Activated CD4-positive, alpha-beta memory T cell treated with anti-CD3 and anti-CD28 coated beads for 36 hours (primary cell): ENCODE measurements at regions of chr9 and their contacts with region 1.

Region 1: DNA sequence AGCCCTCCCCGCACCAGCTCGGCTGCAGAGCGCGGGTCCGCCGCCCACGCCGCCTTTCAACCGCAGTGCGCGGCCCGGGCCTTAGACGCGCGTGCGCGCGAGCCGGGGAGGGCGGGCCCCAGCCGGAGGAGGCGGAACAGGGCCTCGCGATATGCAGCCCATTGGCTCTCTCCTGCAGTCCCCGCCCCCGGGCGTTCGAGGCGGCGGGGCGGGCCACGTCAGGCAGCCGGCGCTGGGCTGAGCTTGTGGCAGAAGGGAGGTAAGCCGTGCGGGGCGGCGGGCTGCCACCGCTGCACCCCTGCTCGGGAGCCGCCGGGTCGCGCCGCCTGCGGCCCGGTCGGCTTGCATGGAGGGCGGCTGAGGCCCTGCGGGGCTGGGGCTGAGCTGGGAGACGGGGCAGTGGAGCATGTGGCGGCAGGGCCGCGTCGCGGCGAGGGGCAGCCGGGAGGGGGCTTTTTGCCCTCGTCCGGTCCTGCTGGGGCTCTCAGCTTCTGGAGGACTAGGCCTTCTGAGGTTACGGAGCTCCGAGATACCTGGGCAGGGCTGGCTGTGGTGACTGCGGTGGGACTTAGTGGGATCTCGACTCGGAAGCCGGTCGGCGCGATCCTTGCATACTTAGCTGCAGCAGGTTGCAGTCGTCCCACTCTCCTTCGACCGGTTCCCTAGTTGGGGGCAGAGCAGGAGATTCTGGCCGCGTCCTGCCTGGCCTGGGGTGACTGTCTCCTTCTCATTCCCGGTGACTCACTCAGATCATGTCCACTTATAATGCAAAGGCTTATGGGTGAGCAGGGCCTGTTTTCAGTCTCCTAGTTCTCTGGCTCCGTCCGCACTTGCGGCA is at the start of gene FOCAD:
- DNase-seq: peak; percentile 97
- H3K4me3 Mint-ChIP-seq: peak within 1 kb of the TSS; percentile 83
- H3K27ac Mint-ChIP-seq: peak within 1 kb of the TSS; percentile 85
- H3K4me1 Mint-ChIP-seq: peaks cover 22% of the 10 kb centered on the region
- H3K27me3 Mint-ChIP-seq: no peaks in the 10 kb centered on the region
- total RNA-seq, gene FOCAD: 35.4 to 37.1 TPM

Region 2: DNA sequence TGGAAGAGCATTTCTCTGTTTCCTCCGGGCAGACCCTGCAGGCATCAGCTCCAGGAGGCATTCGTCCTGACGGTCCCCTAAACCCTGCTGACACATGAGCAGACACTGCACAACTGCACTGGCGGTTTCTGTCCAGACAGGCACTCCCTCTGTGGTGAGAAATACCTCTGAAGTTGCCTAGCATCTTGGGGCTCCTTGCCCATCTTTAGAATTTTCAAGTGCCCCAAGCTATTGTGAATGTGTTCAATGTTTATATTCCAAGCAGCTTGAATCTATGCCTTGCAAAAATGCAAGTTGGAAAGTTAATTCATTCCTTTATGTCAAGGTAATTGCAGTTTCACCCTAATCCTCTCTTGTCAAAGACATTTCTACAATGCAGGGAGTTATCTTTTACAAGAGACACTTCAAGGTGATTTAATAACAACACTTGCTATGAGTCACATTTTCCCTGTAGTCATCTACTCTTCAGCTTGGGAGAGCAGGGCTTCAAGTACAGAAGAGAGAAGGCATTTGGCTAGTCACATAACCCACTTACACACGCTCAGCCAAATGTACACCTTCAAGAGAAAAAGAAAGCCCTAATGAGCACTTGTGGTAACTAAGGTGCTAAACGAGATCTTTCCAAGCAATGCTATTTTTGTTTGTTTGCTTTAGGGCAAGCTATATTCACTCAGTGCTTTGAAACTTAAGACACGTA is 364.5 kb before region 1 on chr9:
- CTCF ChIA-PET with region 1: no interaction called
- POLR2A ChIA-PET with region 1: interaction called, 3 read pairs
- intact Hi-C with region 1: loop called (anchors 2 kb)
- DNase-seq: peak; percentile 48
- H3K4me3 Mint-ChIP-seq: no peak overlapping the region
- H3K27ac Mint-ChIP-seq: peak overlapping the region; percentile 63
- H3K4me1 Mint-ChIP-seq: peaks cover 80% of the 10 kb centered on the region
- H3K27me3 Mint-ChIP-seq: no peaks in the 10 kb centered on the region

Region 3: DNA sequence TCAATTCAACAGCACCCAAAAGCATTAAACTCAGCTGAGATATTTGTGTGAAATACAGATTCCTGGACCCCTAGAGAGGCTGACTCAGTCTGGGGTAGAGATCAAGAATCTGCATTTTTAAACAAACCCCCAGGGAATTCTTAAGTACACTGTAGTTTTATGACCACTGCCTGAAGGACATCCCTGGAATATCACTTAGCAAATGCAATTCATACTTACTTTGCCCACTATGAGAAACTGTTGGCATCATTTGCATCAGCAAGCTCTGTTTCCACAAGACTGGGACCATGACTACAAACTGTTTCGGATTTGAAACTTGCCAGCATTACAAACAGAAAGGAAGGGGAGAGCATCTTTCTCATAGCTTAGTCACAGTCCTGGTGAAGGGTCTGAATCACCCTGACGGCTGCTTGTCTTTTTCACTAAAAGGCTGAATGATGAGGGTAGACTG is 125.7 kb before region 1 on chr9:
- CTCF ChIA-PET with region 1: interaction called, 6 read pairs
- POLR2A ChIA-PET with region 1: no interaction called
- intact Hi-C with region 1: loop called (anchors 2 kb)
- DNase-seq: peak; percentile 60
- H3K4me3 Mint-ChIP-seq: no peak overlapping the region
- H3K27ac Mint-ChIP-seq: peak overlapping the region; percentile 65
- H3K4me1 Mint-ChIP-seq: peaks cover 86% of the 10 kb centered on the region
- H3K27me3 Mint-ChIP-seq: no peaks in the 10 kb centered on the region

Region 4: DNA sequence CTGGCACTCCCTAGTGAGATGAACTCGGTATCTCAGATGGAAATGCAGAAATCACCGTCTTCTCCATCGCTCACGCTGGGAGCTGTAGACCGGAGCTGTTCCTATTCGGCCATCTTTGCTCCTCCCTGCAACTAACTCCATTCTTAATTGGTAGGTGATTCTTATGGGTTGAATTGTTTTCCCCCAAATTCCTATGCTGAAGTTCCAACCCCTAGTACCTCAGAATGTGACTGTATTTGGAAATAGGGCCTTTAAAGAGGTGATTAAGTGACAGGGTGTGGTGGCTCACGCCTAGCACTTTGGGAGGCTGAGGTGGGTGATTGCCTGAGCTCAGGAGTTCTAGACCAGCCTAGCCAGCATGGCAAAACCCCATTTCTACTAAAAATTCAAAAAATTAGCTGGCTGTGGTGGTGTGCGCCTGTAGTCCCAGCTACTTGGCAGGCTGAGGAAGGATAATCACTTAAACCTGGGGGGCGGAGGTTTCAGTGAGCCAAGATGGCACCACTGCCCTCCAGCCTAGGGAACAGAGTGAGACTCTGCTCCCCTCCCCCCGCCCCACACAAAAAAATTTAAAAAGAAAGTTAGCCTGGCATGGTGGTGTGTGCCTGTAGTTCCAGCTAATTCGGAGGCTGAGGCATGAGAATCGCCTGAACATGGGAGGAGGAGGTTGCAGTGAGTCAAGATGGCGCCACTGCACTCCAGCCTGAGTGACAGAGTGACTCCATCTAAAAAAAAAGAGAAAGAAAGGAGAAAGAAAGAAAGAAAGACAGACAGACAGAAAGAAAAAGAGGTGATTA is 25.4 kb before region 1 on chr9:
- CTCF ChIA-PET with region 1: no interaction called
- POLR2A ChIA-PET with region 1: interaction called, 4 read pairs
- intact Hi-C with region 1: loop called (anchors 2 kb)
- DNase-seq: no peak
- H3K4me3 Mint-ChIP-seq: no peak overlapping the region
- H3K27ac Mint-ChIP-seq: peak overlapping the region; percentile 72
- H3K4me1 Mint-ChIP-seq: peaks cover 4% of the 10 kb centered on the region
- H3K27me3 Mint-ChIP-seq: no peaks in the 10 kb centered on the region

Region 5: DNA sequence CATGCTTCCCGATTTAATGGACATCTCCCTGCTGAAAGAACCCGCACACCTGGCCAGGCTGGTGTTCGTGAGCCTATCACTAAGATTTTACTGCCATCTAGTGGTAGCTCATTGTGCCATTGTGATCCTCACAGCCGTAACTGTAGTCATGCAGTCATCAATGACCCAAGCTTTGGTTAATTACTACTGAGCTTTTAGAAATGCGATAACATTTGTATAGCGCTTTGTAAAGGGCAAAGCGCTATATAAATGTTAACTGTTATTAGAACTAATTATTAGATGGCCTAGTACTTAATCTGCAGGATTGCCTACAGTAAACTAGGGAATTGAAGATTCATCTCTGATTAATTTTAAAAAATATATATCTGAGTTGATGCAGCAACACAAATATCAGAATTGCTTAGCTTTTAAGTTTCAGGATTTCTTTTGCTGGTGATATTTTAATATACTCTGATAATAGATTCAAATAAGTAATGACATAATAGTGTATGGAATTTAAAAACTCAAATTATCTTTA is 257.0 kb after region 1 on chr9:
- CTCF ChIA-PET with region 1: interaction called, 6 read pairs
- POLR2A ChIA-PET with region 1: no interaction called
- intact Hi-C with region 1: loop called (anchors 5 kb)
- DNase-seq: peak; percentile 60
- H3K4me3 Mint-ChIP-seq: no peak overlapping the region
- H3K27ac Mint-ChIP-seq: no peak overlapping the region
- H3K4me1 Mint-ChIP-seq: peaks cover 3% of the 10 kb centered on the region
- H3K27me3 Mint-ChIP-seq: no peaks in the 10 kb centered on the region

Region 6: GRCh38 chr9:21096172-21096900 is 412.1 kb after region 1 on chr9:
- CTCF ChIA-PET with region 1: no interaction called
- POLR2A ChIA-PET with region 1: interaction called, 3 read pairs
- intact Hi-C with region 1: loop called (anchors 2 kb)
- DNase-seq: peak; percentile 49
- H3K4me3 Mint-ChIP-seq: peak overlapping the region; percentile 73
- H3K27ac Mint-ChIP-seq: peak overlapping the region; percentile 85
- H3K4me1 Mint-ChIP-seq: peaks cover 34% of the 10 kb centered on the region
- H3K27me3 Mint-ChIP-seq: no peaks in the 10 kb centered on the region